ENCODE measurements at regions of chr14 and their contacts with region 1.

Region 1: DNA sequence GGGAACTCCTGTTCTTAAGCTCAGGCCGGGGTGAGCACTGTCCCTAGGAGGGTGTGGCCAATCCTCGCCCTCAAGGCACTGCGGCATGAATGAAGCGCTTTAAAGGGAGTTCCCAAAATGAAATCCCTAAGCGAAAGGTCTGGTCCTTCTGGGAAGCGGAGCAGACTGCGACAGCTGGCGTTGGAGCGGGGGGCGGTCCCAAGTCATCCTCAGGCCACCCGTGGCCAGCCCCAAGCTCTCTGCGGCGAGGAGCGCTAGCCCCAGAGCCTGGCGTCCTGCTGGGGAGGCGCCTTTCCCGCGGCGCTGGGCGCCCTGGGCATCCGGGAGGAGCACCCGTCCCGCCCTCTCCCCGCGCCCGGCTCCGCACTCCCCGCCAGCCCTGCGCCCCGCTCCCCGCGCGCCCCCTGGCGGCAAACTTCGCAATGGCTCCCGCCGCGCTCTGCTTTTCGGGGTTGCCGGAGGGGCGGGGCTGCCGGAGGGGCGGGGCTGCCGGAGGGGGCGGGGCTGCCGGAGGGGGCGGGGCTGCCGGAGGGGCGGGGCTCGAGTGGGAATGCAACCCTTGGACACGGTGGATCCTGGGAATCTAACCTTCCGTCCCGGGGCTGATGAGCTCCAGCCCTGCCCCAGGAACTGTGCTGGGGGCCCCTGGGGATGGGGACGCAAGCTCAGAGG is 25.4 kb downstream of the ZBTB42 start:
- DNase-seq: peak; percentile 69
- H3K4me3 ChIP-seq: peak overlapping the region; percentile 53 to 82 (median 64)
- H3K27ac ChIP-seq: no peak overlapping the region
- H3K4me1 ChIP-seq: peaks cover 10% of the 10 kb centered on the region
- H3K27me3 ChIP-seq: no peaks in the 10 kb centered on the region
- CTCF ChIP-seq: peak; percentile 40 to 59
- POLR2A ChIP-seq: no peak

Region 2: DNA sequence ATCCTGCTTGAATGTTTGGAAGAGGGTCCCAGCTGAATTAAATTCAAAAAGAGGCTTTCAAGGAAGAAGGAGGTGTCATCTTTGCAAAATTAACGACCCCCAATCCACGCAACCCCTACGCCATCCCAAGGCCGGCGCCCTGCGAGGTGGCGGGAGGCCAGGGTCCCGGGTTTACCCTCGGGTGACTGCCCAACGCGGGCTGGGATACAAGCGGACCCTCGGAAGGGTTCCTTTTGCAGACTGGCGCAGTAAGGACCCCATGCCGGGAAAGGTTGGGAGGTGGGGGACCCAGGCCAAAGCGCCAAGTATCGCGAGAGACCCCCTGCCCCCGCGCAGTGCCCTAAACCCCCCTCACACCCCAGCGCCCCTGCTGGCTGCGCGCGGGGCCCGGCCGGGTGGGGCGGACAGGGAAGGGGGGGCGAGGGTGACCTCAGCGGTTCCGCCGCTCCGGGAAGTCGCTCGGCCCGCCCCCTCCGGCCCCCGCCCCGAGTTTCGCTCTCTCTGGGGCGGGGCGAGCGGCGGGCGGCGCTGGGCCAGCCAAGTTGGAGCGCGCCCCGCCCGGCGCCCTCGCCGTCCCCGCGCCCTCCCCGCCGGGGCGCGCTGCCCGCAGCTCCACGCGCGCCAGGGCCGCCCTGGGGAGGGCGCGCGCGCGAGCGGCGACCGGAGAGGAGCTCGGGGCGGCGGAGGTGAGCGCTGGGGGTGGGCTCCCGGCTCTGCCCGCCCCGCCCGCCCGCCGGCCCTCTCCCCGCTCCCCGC is 26.1 kb before region 1 on chr14:
- CTCF ChIA-PET with region 1: interaction called, 17 read pairs
- POLR2A ChIA-PET with region 1: no interaction called
- dilution Hi-C with region 1: no loop called
- intact Hi-C with region 1: loop called (anchors 2 kb)
- DNase-seq: peak; percentile 62
- H3K4me3 ChIP-seq: peak overlapping the region in 1 of 3 experiments; percentile 71
- H3K27ac ChIP-seq: no peak overlapping the region
- H3K4me1 ChIP-seq: peaks cover 7% of the 10 kb centered on the region
- H3K27me3 ChIP-seq: no peaks in the 10 kb centered on the region
- CTCF ChIP-seq: peak; percentile 10 to 51
- POLR2A ChIP-seq: no peak

Region 3: DNA sequence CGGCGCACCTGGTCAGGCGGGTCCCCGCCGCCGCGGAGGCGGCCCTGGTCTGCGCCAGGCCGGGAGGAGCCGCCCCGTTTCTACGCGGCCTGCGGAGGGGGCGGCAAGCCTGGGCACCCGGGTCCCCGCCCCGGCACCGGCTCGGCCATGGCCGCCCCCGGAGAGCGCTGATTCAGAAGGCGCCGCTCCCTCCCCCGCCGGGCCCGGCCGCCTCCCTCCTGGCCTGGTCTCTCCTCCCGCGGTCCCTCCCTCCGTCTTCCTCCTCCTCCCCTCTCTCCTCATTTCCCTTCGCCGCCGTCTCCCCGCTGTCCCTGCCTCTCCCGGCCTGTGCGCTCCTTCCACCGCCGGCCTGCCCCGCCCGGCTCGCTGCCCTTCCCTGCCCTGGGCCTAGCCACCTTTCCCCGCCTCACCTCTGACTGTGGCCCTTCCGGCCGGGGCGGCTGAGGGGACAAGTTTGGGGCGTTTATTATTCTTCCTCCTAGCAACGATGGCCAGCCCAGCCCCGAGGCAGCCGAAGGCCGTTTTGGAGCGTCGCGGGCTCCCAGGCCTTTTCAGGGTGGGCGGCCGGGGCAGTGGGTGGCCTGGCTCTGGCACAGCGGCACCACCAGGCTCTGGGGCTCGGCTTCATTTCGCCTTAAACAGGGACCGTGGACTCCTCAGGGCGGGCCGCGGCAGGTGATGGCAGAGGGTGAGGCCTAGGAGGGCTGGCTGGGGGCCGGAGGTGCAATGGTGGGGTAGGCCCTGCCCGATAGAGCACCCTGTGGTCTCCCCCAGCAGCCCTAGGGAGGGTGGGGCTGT is 39.5 kb after region 1 on chr14:
- CTCF ChIA-PET with region 1: interaction called, 3 read pairs
- POLR2A ChIA-PET with region 1: no interaction called
- dilution Hi-C with region 1: no loop called
- intact Hi-C with region 1: loop called (anchors 2 kb)
- DNase-seq: peak; percentile 65
- H3K4me3 ChIP-seq: peak overlapping the region; percentile 28 to 63 (median 44)
- H3K27ac ChIP-seq: peak overlapping the region; percentile 26
- H3K4me1 ChIP-seq: peaks cover 5% of the 10 kb centered on the region
- H3K27me3 ChIP-seq: peaks cover 13 to 16% of the 10 kb centered on the region in 2 experiments
- CTCF ChIP-seq: no peak
- POLR2A ChIP-seq: peak; percentile 51

Region 4: DNA sequence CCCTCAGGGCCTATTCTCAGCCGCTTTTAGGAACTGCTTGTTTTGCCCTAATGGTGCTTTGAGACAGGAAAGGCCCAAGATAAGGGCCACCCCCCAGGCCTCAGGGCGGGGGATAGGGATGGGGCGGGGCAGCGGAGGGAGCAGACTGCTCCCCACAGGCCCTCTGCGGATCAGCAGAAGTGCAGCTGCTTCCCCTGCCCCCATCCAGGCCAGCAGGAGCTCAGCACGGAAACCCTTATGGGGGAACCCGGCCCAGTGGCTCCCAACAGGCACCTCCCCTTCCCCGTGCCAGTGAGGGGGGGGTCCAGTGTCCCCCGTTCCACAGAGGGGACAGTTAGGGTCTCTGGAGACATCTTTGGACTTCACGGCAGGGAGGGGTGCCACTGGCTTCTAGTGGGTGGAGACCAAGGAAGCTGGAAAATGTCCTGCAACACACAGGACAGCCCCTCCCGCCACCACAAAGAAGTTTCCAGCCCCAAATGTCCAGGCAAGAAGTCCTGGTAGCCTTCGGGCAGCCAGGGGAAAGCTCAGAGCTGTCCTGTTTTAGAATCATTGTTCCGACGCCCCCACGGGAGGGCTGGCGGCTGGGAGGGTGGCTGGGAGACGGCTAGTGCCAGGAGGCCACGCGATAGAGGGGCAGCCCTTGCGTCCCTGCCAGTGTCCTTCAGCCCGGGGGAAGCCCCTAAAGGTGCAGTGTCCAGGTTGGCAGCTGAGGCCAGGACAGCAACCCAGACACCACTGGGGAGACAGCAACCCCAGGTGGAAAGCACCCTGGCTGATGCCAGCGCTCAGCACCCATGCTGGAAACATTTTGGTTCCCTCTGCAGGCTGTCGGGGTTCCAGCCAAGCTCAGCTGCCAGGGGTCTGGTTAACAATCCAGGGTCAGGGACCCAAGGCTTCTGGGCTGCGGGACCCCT is 249.3 kb after region 1 on chr14:
- CTCF ChIA-PET with region 1: no interaction called
- POLR2A ChIA-PET with region 1: no interaction called
- dilution Hi-C with region 1: no loop called
- intact Hi-C with region 1: no loop called
- DNase-seq: no peak
- H3K4me3 ChIP-seq: no peak overlapping the region
- H3K27ac ChIP-seq: no peak overlapping the region
- H3K4me1 ChIP-seq: no peaks in the 10 kb centered on the region
- H3K27me3 ChIP-seq: no peaks in the 10 kb centered on the region
- CTCF ChIP-seq: no peak
- POLR2A ChIP-seq: no peak

Measured in endothelial cell of umbilical vein (primary cell).